Dendritic cell treated with granulocyte-macrophage colony-stimulating factor and Interleukin-4, amounts not matched to agents 40 ng/mL and 50 ng/mL, for 4 days (primary cell): ENCODE measurements at regions of chr7 and their contacts with region 1.

Region 1: GRCh38 chr7:97835296-97836138 is 36.7 kb downstream of the ASNS start:
- H3K4me3 Mint-ChIP-seq: no peak overlapping the region
- H3K27ac Mint-ChIP-seq: no peak overlapping the region
- H3K4me1 Mint-ChIP-seq: no peaks in the 10 kb centered on the region
- H3K27me3 Mint-ChIP-seq: peaks cover 8% of the 10 kb centered on the region

Region 2: DNA sequence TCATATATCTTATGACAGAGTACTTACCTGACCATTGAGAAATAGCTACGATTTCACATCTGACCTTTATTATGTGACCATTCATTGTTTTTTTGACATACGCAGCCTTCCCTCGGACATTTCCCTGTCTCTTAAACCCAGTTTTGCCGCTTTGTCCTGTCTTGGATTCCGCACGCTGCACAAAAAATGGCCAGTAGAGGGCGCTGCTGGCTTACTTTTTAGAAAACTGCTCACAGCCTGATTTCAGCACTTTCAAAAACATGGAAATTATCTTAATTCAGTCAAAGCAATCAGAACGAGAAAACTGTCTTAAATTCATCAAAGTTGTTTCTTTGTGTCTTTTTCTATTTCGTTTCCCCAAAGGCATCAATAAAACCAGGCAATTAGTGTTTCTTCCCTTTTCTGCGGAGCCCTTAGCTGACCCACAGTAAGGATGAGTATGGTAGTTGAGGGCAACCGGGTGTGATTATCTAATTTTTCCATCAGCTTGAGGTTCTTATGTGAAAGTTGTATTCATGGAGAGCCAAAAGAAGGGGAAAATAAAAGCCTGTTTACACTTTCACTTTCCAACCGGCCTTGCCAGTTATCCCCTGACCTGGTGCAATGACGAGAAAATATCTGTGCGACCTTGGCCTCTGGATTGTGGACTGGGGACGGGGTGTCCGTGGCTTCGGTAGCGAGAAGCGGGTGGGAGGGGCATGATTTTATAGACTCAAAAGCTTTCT is 1918.8 kb before region 1 on chr7:
- intact Hi-C with region 1: loop called (anchors 1 kb)
- H3K4me3 Mint-ChIP-seq: no peak overlapping the region
- H3K27ac Mint-ChIP-seq: no peak overlapping the region
- H3K4me1 Mint-ChIP-seq: peaks cover 5% of the 10 kb centered on the region
- H3K27me3 Mint-ChIP-seq: peaks cover 10% of the 10 kb centered on the region

Region 3: DNA sequence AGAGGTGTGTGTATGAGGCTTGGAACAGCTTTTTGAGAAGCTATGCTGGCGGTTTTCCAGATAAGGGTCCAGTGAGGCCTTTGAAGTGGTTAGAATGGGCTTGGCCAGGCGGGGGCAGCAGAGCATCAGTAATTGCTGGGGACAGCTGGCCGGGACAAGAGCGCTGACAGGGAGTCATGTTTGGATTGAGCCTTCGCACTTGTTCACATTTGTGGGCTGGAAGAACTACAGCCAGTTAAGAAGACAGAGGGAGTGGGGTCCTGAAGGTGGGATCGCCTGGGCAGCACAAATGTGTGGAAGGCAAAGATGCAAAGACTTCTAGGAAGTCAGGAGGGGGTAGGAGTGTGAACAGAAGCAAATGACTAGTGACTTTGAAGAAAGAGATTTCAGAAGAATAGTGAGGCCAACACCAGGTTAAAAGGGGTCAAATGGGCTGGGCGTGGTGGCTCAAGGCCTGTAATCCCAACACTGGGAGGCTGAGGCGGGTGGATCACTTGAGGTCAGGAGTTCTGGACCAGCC is 730.7 kb before region 1 on chr7:
- intact Hi-C with region 1: loop called (anchors 1 kb)
- H3K4me3 Mint-ChIP-seq: no peak overlapping the region
- H3K27ac Mint-ChIP-seq: no peak overlapping the region
- H3K4me1 Mint-ChIP-seq: no peaks in the 10 kb centered on the region
- H3K27me3 Mint-ChIP-seq: peaks cover 12% of the 10 kb centered on the region

Region 4: DNA sequence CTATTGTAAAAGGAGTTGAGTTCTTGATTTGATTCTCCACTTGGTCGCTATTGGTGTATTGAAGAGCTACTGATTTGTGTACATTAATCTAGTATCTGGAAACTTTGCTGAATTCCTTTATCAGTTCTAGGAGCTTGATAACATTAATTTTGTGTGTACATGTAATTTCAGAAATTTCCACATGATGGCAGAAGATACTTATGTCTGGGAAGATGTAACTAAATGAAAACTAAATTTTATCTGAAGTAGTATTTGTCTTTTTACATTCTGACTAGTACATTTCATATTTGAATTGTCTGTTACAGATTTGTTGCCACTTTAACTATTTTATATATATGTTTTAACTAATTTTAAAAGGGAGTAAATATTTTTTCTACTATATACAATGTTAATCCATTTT is 690.4 kb before region 1 on chr7:
- intact Hi-C with region 1: loop called (anchors 2 kb)
- H3K4me3 Mint-ChIP-seq: no peak overlapping the region
- H3K27ac Mint-ChIP-seq: no peak overlapping the region
- H3K4me1 Mint-ChIP-seq: no peaks in the 10 kb centered on the region
- H3K27me3 Mint-ChIP-seq: no peaks in the 10 kb centered on the region

Region 5: DNA sequence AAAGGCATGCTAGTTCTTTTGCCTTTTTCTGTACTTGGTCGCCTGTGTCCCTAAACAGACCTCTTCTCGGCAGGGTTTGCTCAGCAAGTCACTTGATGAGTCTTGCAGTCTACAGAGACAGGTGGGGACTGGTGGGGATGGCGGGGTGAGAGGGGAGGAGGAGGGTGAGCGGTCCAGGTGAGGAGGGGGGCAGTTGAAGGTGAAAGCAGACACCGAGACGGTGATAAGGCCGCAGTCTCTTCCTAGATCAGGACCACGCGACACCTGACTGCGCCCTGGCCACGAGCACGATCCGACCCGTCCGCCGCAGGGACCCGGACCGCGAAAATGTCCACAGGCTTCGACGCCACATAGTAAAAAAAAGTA is 36.1 kb after region 1 on chr7:
- intact Hi-C with region 1: no loop called
- H3K4me3 Mint-ChIP-seq: peak overlapping the region; percentile 77
- H3K27ac Mint-ChIP-seq: peak overlapping the region; percentile 34
- H3K4me1 Mint-ChIP-seq: no peaks in the 10 kb centered on the region
- H3K27me3 Mint-ChIP-seq: peaks cover 20% of the 10 kb centered on the region